ENCODE measurements at regions of chr2 and their contacts with region 1.

Region 1: GRCh38 chr2:111883661-111884591 is at the start of gene ANAPC1:
- DNase-seq: peak; percentile 84 to 94 (median 86)
- ATAC-seq: peak; percentile 95
- H3K4me3 ChIP-seq: peak within 1 kb of the TSS; percentile 98
- H3K27ac ChIP-seq: peak within 1 kb of the TSS; percentile 92
- H3K4me1 ChIP-seq: peaks cover 0 to 8% of the 10 kb centered on the region in 2 experiments; a peak in 3 of 5 replicates
- H3K27me3 ChIP-seq: no peaks in the 10 kb centered on the region
- CTCF ChIP-seq: no peak
- EP300 ChIP-seq: no peak
- POLR2A ChIP-seq: peak; percentile 98
- RAD21 ChIP-seq: no peak
- polyA plus RNA-seq, gene ANAPC1: 14.0 to 18.9 TPM

Region 2: DNA sequence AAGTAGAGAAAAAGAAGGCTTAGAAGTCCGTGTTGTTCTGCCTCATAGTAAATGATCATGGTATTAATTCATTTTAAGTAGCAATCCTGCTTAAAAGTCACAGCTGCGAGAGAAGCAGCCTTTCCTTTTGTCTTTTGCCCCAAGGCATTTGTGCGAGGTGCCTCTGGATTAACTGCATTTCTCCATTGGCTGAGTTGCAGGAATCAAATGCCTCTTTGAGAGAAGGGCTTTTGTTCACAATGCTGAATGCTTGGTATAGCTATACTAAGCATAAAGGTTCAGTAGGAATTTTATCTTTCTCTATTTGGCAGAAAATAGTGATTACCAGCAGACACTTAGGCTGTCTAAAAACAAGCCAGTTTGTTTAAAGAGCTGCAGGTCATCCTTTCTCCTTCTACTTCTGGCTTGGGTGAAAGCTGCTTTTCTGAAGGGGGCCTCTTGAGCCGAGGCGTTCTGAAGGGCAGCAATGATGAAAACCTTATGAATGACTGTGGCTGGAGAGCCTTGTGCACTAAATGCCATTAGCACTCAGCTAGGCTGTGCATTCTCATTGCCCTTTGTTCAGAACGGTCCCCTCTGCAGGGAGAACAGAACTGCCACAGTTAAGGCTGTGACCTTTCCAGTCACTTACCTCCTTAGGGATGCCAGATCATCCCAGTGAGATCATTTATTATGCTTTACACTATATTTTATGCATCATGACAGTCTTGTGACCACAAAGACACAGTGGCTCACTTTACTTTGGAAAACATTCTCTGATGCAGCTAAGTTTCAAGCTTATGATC is 102.4 kb after region 1 on chr2:
- CTCF ChIA-PET with region 1: no interaction called
- POLR2A ChIA-PET with region 1: no interaction called
- in situ Hi-C with region 1: no loop called
- intact Hi-C with region 1: no loop called
- DNase-seq: no peak
- ATAC-seq: peak; percentile 69
- H3K4me3 ChIP-seq: no peak overlapping the region
- H3K27ac ChIP-seq: no peak overlapping the region
- H3K4me1 ChIP-seq: peaks cover 0 to 14% of the 10 kb centered on the region in 2 experiments; a peak in 3 of 5 replicates
- H3K27me3 ChIP-seq: no peaks in the 10 kb centered on the region
- CTCF ChIP-seq: no peak
- EP300 ChIP-seq: no peak
- POLR2A ChIP-seq: no peak
- RAD21 ChIP-seq: no peak

Region 3: GRCh38 chr2:112048887-112049286 is 165.0 kb after region 1 on chr2:
- CTCF ChIA-PET with region 1: interaction called, 60 read pairs
- POLR2A ChIA-PET with region 1: no interaction called
- in situ Hi-C with region 1: no loop called
- intact Hi-C with region 1: loop called (anchors 1 kb)
- DNase-seq: peak; percentile 27 to 68 (median 37)
- ATAC-seq: peak; percentile 87
- H3K4me3 ChIP-seq: no peak overlapping the region
- H3K27ac ChIP-seq: no peak overlapping the region
- H3K4me1 ChIP-seq: peaks cover 8 to 17% of the 10 kb centered on the region in 2 experiments; a peak in 4 of 5 replicates
- H3K27me3 ChIP-seq: no peaks in the 10 kb centered on the region
- CTCF ChIP-seq: peak; percentile 56 to 94 (median 67); a peak in 5 of 6 replicates
- EP300 ChIP-seq: no peak
- POLR2A ChIP-seq: no peak
- RAD21 ChIP-seq: peak; percentile 92

Region 4: DNA sequence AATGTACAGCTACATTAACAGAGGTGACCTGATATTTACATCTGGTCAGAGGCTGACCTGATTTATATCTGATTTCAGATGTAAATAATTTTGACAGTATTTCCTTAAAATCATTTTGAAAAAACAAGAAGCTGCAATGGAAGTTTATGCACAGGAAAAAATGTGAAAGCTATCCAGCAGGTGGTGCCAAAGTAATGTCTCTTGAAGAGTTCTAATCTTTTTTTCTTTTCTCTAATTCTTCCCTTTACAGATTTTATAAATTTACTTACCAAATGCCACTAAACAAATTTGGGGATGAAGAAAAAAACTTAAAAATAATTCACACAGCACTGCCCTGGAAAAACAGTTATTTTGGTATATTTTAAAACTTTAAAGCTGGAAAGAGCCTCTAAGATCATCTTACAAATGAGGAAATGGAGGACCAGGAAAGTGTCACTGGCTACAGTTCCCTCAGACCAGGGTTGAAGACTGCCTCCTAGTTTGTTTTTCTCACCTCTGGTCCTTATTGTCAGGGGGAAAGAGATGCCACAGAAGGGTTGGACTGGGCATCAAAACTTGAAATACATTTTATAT is 237.8 kb after region 1 on chr2:
- CTCF ChIA-PET with region 1: no interaction called
- POLR2A ChIA-PET with region 1: no interaction called
- in situ Hi-C with region 1: no loop called
- intact Hi-C with region 1: loop called (anchors 10 kb)
- DNase-seq: peak in 1 of 4 experiments; percentile 55
- ATAC-seq: no peak; the same call in 2 of the 3 replicates
- H3K4me3 ChIP-seq: no peak overlapping the region
- H3K27ac ChIP-seq: no peak overlapping the region
- H3K4me1 ChIP-seq: no peaks in the 10 kb centered on the region
- H3K27me3 ChIP-seq: no peaks in the 10 kb centered on the region
- CTCF ChIP-seq: peak; percentile 43 to 78 (median 44); a peak in 4 of 6 replicates
- EP300 ChIP-seq: no peak
- POLR2A ChIP-seq: no peak
- RAD21 ChIP-seq: peak; percentile 73 to 80

Region 5: GRCh38 chr2:112229348-112229747 is 345.4 kb after region 1 on chr2:
- CTCF ChIA-PET with region 1: no interaction called
- POLR2A ChIA-PET with region 1: no interaction called
- in situ Hi-C with region 1: loop called (anchors 25 kb)
- intact Hi-C with region 1: no loop called
- DNase-seq: no peak
- ATAC-seq: no peak
- H3K4me3 ChIP-seq: no peak overlapping the region
- H3K27ac ChIP-seq: no peak overlapping the region
- H3K4me1 ChIP-seq: no peaks in the 10 kb centered on the region
- H3K27me3 ChIP-seq: no peaks in the 10 kb centered on the region
- CTCF ChIP-seq: no peak
- EP300 ChIP-seq: no peak
- POLR2A ChIP-seq: no peak
- RAD21 ChIP-seq: no peak

Region 6: GRCh38 chr2:112343827-112344585 is 460.1 kb after region 1 on chr2:
- CTCF ChIA-PET with region 1: no interaction called
- POLR2A ChIA-PET with region 1: no interaction called
- in situ Hi-C with region 1: loop called (anchors 10 kb)
- intact Hi-C with region 1: no loop called
- DNase-seq: no peak
- ATAC-seq: no peak; the same call in 2 of the 3 replicates
- H3K4me3 ChIP-seq: no peak overlapping the region
- H3K27ac ChIP-seq: no peak overlapping the region
- H3K4me1 ChIP-seq: peaks cover 0 to 8% of the 10 kb centered on the region in 2 experiments; a peak in 2 of 5 replicates
- H3K27me3 ChIP-seq: no peaks in the 10 kb centered on the region
- CTCF ChIP-seq: no peak
- EP300 ChIP-seq: no peak
- POLR2A ChIP-seq: no peak
- RAD21 ChIP-seq: no peak

Region 7: DNA sequence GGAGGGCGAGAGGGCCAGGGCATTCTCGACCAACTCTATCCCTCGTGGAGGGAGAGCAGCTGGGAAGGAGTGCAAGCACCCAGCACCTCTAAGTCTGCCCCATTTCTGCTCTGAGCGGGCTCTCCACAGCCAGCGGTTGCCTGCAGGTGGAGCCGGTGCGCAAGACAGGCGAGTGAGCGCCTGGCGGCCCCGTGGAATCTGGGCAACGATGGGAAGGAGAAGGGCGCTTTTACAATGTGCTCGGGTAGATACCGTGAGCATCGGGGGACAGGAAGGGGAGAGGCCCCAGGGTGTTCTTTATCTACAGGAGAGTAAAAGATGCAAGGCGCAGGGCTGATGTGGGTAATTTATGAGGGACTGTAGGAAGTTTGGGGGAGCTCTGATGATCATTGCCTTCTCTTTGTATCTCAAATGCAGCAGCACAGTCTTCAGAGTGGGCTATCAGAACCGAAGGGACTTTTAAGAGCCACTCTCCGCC is 597.2 kb after region 1 on chr2:
- CTCF ChIA-PET with region 1: no interaction called
- POLR2A ChIA-PET with region 1: no interaction called
- in situ Hi-C with region 1: no loop called
- intact Hi-C with region 1: loop called (anchors 10 kb)
- DNase-seq: peak; percentile 79 to 94 (median 84)
- ATAC-seq: peak; percentile 89
- H3K4me3 ChIP-seq: peak overlapping the region; percentile 76
- H3K27ac ChIP-seq: peak overlapping the region; percentile 91
- H3K4me1 ChIP-seq: peaks cover 13 to 25% of the 10 kb centered on the region in 2 experiments; a peak in 4 of 5 replicates
- H3K27me3 ChIP-seq: no peaks in the 10 kb centered on the region; a peak in 1 of 5 replicates
- CTCF ChIP-seq: peak; percentile 87 to 96 (median 94)
- EP300 ChIP-seq: peak; percentile 36; the same call in 1 of the 2 replicates
- POLR2A ChIP-seq: peak; percentile 66
- RAD21 ChIP-seq: peak; percentile 79 to 88

Measured in K562 (cell line).